Dorsolateral prefrontal cortex (tissue), 120 donors: ENCODE measurements at regions of chrX and their contacts with region 1.

Region 1: GRCh38 chrX:110146521-110146920 is 143.6 kb downstream of the TMEM164 start:
- DNase-seq: peak in 1 of 10 donors; percentile 15
- H3K4me3 ChIP-seq: no peak overlapping the region
- H3K27ac ChIP-seq: no peak overlapping the region
- H3K27me3 ChIP-seq: peaks cover 0 to 54% (median 8%) of the 10 kb centered on the region in 45 donors
- CTCF ChIP-seq: peak; percentile 40 to 81 (median 63)

Region 2: DNA sequence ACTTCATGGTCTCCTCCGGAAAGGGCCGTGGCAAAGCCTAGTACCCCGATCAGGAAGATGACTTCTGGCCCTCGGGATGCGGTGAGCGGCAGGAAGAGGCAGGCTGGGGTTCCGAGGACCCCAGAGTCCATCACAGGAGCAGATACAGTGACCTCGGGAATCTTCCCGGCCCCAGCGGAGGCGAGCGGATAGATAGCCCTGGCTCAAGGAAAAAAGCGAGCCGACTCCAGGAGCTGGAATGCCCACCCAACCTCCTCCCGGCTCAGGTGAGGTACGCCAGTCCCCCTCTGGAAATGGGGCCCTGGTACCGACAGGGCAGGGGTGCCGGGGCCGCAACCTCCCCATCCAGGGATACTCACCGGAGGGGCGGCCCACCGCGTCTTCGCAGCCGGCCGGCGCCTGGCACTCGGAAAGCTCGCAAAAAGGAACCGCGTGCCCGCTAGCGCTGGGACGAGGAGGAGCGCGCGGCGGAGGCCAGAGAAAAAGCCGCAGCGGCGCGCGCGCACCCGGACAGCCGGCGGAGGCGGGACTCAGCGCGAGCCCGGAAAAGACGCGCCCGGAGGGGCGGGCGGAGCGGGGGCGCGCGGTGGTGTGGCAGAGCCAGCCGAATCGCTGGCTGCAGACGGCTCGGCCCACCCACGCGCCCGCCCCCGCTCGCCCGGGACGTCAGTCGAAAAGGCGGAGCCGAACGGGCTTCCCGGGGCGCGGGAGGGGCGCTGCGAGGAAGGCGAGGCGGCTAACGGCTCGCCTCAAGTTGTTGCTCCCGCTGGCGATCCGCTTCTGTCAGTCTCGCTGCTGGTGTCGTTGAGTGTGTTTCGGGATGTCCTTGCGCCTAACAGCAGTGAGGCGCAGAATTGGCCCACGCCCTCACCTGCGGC is 413.5 kb before region 1 on chrX and contains the start of gene ACSL4:
- intact Hi-C with region 1: loop called in 1 of 2 experiments (anchors 5 kb)
- DNase-seq: peak; percentile 66 to 91 (median 84)
- H3K4me3 ChIP-seq: peak within 1 kb of the TSS; percentile 42 to 85 (median 72)
- H3K27ac ChIP-seq: peak within 1 kb of the TSS in 58 of 59 donors; percentile 24 to 93 (median 81)
- H3K27me3 ChIP-seq: peaks cover 0 to 40% (median 5%) of the 10 kb centered on the region in 45 donors
- CTCF ChIP-seq: peak in 5 of 56 donors; percentile 10 to 25 (median 12)
- total RNA-seq, gene ACSL4: 24.2 to 101 (median 62.2) TPM

Region 3: DNA sequence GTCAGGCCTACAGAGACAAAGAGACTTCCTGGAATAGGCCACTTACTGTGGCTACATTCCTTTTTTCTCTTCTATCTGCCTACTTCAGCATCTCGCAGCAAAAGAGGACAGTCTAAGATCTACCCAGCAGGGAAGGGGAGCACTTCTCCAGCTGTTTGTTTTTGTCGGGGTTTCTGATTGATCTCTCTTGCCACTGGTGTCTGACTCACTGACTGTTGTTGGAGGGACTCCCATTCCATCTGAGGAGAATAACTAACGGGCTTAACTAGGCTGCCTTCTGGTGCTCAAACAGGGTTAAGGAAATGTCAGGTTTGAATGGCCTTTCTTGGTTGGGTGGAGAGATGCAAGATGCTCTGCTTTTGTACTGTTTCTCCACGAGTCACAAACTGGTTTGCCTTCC is 243.9 kb before region 1 on chrX:
- intact Hi-C with region 1: loop called in 1 of 2 experiments (anchors 10 kb)
- DNase-seq: no peak
- H3K4me3 ChIP-seq: no peak overlapping the region
- H3K27ac ChIP-seq: no peak overlapping the region
- H3K27me3 ChIP-seq: peaks cover 0 to 66% (median 25%) of the 10 kb centered on the region in 45 donors
- CTCF ChIP-seq: no peak

Region 4: DNA sequence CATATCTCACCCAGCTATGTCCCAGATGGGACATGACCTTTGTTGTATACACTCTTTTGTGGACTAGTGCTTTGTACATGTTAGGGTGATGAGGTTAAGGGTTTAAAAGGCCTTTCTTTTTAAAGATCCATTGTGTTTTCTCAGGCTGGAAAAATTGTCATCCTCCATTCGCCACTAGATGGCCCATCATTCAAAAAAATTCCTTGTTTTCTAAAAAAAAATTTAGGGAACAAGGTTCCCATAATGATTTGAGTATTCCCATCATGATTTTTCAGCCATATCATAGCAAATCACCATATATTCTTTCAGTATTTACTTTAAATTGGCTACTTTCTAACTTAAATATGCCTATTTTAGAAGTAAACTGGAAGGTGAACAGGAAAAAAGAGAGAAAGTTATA is 235.5 kb before region 1 on chrX:
- intact Hi-C with region 1: loop called (anchors 2 to 10 kb)
- DNase-seq: no peak
- H3K4me3 ChIP-seq: no peak overlapping the region
- H3K27ac ChIP-seq: no peak overlapping the region
- H3K27me3 ChIP-seq: peaks cover 0 to 59% (median 20%) of the 10 kb centered on the region in 45 donors
- CTCF ChIP-seq: peak; percentile 17 to 73 (median 56)

Region 5: GRCh38 chrX:110002300-110003166 is 144.0 kb before region 1 on chrX and contains the start of gene TMEM164:
- intact Hi-C with region 1: loop called in 1 of 2 experiments (anchors 10 kb)
- DNase-seq: peak; percentile 42 to 80 (median 70)
- H3K4me3 ChIP-seq: peak within 1 kb of the TSS; percentile 45 to 78 (median 64)
- H3K27ac ChIP-seq: peak within 1 kb of the TSS in 50 of 59 donors; percentile 22 to 86 (median 64)
- H3K27me3 ChIP-seq: peaks cover 0 to 56% (median 11%) of the 10 kb centered on the region in 45 donors
- CTCF ChIP-seq: peak in 5 of 56 donors; percentile 9 to 26 (median 11)
- total RNA-seq, gene TMEM164: 12.7 to 60.9 (median 23.9) TPM

Region 6: GRCh38 chrX:110477593-110478228 is 331.2 kb after region 1 on chrX:
- intact Hi-C with region 1: no loop called
- DNase-seq: no peak
- H3K4me3 ChIP-seq: no peak overlapping the region
- H3K27ac ChIP-seq: no peak overlapping the region
- H3K27me3 ChIP-seq: peaks cover 0 to 84% (median 23%) of the 10 kb centered on the region in 45 donors
- CTCF ChIP-seq: no peak

Region 7: DNA sequence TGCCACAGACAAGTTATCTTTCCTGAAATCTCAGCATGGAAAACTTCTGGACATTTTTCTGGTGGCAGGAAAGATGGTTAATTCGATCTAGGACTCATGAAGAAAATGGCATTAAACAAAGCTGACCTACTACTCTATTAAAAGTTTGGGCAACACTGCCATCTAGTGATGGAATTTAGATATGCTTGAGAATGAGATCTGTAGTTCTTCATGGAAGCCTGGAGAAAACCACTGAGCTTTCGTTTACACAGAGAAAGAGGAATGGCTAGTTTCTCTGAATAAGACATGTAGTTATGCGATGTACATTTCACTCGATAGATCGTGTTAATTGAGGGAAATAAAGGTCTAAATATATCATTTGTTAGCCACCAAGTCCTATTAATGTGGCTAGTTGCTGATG is 700.8 kb after region 1 on chrX:
- intact Hi-C with region 1: loop called in 1 of 2 experiments (anchors 10 kb)
- DNase-seq: peak in 1 of 10 donors; percentile 4
- H3K4me3 ChIP-seq: no peak overlapping the region
- H3K27ac ChIP-seq: no peak overlapping the region
- H3K27me3 ChIP-seq: peaks cover 0 to 86% (median 25%) of the 10 kb centered on the region in 45 donors
- CTCF ChIP-seq: peak; percentile 49 to 91 (median 75)